A673 (cell line): ENCODE measurements at regions of chr10 and their contacts with region 1.

Region 1: DNA sequence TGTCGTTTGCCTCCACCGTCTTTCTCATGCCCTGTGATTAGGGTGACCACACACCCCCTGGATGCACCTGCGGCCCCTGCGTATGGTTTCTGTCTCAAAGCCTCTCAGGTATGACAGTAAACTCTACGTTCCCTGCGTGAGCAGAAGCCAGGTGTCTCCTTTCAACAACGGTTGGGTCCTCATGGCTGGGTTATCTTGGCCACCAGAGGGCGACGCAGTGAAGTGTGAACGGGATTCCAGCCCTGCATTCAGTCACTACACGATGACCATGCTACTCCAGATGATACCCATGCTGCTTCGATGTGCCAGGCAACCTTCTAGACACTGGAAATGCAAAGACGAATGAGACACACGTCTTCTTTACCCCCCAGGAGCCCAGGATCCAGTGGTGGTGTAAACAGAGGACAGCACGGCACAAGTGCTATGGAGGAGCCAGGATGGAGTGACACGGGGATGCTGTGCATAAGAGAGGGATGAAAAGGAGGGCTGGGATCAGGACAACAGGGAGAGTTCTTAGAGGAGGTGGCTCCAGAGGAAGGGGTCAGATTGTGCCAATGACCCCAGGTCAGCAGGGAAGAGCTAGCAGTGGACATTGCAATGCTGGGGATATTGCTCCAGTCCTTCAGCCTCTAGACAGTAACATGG is 228.1 kb upstream of the PFKP start:
- DNase-seq: peak; percentile 71
- H3K4me3 ChIP-seq: no peak overlapping the region
- H3K27ac ChIP-seq: no peak overlapping the region
- H3K4me1 ChIP-seq: no peaks in the 10 kb centered on the region
- H3K27me3 ChIP-seq: no peaks in the 10 kb centered on the region
- CTCF ChIP-seq: peak; percentile 89

Region 2: GRCh38 chr10:2633630-2634029 is 205.6 kb before region 1 on chr10:
- CTCF ChIA-PET with region 1: no interaction called
- POLR2A ChIA-PET with region 1: interaction called, 13 read pairs
- intact Hi-C with region 1: no loop called
- DNase-seq: no peak
- H3K4me3 ChIP-seq: no peak overlapping the region
- H3K27ac ChIP-seq: no peak overlapping the region
- H3K4me1 ChIP-seq: no peaks in the 10 kb centered on the region
- H3K27me3 ChIP-seq: peaks cover 98% of the 10 kb centered on the region
- CTCF ChIP-seq: no peak

Region 3: DNA sequence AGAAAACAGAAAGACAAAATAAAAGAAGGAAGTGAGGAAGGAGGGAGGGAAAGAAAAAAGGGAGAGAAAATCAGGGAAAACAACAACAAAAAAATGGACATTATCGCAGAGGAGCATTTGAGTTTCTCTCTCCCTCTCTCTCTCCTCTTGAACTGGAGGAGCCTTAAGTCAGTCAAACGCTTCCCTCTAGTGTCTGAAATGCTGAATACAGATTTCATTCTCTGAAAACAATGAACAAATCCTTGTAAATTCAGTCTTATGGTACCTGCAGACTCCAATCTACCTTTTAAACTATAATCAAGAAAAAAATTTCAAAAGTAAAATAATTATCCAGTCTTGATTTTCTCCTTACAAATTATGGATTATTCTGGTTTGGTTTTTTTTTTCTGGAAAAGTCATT is 138.9 kb after region 1 on chr10:
- CTCF ChIA-PET with region 1: no interaction called
- POLR2A ChIA-PET with region 1: no interaction called
- intact Hi-C with region 1: loop called (anchors 1 kb)
- DNase-seq: peak; percentile 79
- H3K4me3 ChIP-seq: no peak overlapping the region
- H3K27ac ChIP-seq: no peak overlapping the region
- H3K4me1 ChIP-seq: no peaks in the 10 kb centered on the region
- H3K27me3 ChIP-seq: no peaks in the 10 kb centered on the region
- CTCF ChIP-seq: peak; percentile 74

Region 4: GRCh38 chr10:3043512-3044368 is 204.5 kb after region 1 on chr10:
- CTCF ChIA-PET with region 1: no interaction called
- POLR2A ChIA-PET with region 1: no interaction called
- intact Hi-C with region 1: loop called (anchors 1 kb)
- DNase-seq: peak; percentile 90
- H3K4me3 ChIP-seq: no peak overlapping the region
- H3K27ac ChIP-seq: no peak overlapping the region
- H3K4me1 ChIP-seq: no peaks in the 10 kb centered on the region
- H3K27me3 ChIP-seq: no peaks in the 10 kb centered on the region
- CTCF ChIP-seq: peak; percentile 88